ENCODE measurements at regions of chr12 and their contacts with region 1.

Region 1: DNA sequence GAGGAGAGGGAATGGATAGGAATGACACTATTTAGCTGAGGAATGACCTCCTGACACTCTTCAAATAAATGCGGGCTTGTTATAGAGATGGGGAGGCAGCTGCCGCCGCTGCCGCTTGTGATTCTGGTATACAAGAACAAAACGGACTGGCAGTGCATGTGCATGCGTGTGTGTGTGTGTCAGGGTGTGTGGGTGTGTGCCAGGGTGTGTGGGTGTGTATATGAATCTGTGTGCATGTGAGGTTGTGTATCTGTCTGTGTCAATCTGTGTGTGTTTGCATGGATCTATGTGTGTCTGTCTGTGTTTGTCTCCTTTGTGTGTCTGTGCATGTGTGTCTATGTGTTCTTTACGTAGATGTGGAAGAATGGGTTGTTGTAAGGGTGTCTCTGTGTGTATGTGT is 26.0 kb upstream of the LHX5 start:
- DNase-seq: no peak
- H3K4me3 ChIP-seq: no peak overlapping the region
- H3K27ac ChIP-seq: no peak overlapping the region
- H3K4me1 ChIP-seq: no peaks in the 10 kb centered on the region
- H3K27me3 ChIP-seq: no peaks in the 10 kb centered on the region
- CTCF ChIP-seq: no peak

Region 2: GRCh38 chr12:114232187-114232586 is 734.5 kb after region 1 on chr12:
- intact Hi-C with region 1: loop called (anchors 5 kb)
- DNase-seq: no peak
- H3K4me3 ChIP-seq: no peak overlapping the region
- H3K27ac ChIP-seq: no peak overlapping the region
- H3K4me1 ChIP-seq: no peaks in the 10 kb centered on the region
- H3K27me3 ChIP-seq: no peaks in the 10 kb centered on the region
- CTCF ChIP-seq: no peak